Sciatic nerve (tissue), 2 donors: ENCODE measurements at regions of chr12 and their contacts with region 1.

Region 1: DNA sequence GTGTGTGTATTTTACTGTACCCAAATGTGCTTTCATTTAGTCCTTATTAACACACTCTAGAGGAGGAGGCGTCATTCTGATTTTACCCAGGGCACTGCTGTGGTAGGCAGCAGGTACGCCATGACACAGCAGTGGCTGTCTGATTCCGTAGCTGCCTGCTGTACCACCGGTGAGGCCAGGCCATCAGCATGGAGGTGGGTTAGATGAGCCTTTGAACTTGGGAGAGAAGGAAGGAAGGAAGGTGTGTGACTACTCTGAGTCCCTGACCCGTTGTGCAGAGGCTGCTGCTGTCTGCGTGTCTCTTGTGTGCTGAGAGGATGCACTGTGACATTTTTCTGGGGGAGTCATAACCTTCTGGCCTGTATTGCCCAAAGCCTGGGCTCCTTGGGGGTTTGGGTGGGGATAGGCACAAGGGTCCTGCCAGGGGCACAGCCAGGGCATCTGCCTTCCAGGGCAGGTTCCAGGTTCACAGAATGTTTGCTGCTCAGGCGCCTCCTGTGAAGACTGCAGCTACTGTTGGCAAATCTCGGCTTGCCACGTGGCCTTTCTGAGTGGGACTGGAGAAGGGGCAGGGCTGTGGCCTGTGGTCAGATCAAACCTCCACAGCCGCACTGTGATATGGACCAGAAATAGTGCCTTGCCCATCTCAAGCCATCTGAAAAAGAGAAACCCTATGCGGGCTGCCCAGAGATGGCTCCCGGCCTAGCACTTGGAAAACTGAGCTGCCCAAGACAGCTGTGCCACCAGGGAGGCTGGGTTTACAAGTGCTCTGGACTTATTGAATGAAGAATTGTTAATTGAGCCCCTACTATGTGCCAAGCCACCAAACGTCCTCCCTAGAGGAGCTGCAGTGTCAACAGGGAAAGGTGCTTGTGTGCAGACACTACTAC is 47.1 kb downstream of the MLXIP start:
- DNase-seq: no peak
- ATAC-seq: no peak

Region 2: DNA sequence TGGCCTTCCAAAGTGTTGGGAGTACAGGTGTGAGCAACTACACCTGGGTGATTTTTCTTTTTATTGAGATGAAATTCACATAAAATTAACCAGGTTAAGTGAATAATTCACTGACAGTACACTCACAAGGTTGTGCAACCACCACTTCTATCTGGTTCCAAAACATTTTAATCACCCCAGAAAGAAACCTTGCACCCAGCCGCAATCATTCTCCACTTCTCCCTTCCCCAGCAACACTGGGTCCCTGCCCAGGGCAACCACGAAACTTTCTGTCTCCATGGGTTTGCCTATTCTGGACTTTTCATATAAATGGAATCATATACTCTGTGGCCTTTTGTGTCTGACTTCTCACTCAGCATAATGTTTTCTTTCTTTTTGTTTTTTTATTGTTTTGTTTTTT is 73.4 kb before region 1 on chr12:
- intact Hi-C with region 1: loop called (anchors 2 kb)
- DNase-seq: no peak
- ATAC-seq: no peak

Region 3: DNA sequence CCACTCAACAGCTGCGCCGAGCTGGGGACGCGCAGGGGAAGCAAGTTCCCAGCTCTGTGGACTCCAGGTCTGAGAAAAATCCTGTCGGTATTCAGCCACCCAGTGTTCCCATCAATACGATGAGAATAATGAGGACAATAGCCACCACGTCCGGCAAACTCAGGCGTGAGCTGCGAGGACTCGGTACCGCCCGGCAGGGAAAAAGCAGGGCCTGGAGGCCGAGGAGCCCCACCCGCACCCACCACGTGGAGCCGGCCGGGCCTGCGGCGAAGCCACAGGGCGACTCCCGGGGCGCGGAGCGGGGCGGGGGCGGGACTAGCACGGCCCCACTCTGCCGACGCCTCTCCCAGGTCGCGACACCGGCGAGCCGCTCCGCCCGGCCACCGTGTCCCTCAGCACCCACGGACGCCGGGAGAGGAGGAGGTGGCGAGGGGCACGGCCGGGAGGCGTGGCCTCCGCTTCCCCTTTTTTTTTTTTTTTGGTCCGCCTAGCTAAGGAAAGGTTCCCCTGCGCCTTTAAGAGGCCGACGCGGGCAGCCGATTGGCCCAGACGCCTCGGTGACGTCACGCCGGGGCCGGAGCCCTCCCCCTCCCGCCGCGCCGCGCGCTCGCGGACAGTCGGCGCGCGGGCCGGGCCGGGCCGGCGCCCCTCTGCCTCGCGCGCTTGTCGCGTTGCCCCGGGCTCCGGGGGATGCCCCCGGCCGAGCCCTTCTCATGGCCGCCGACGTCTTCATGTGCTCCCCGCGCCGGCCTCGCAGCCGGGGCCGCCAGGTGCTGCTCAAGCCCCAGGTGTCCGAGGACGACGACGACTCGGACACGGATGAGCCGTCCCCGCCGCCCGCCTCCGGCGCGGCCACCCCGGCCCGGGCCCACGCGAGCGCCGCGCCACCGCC is 47.3 kb before region 1 on chr12 and contains the start of gene MLXIP:
- intact Hi-C with region 1: no loop called
- DNase-seq: peak; percentile 97
- ATAC-seq: peak; percentile 93
- total RNA-seq, gene MLXIP: 44.2 TPM